Heart left ventricle (tissue), 16 donors: ENCODE measurements at regions of chr17 and their contacts with region 1.

Region 1: GRCh38 chr17:40417609-40418427 is at the start of gene TOP2A:
- DNase-seq: peak; percentile 88 to 99 (median 97)
- ATAC-seq: peak; percentile 99 to 100 (median 100)
- H3K4me3 ChIP-seq: peak within 1 kb of the TSS; percentile 37 to 80 (median 60)
- H3K27ac ChIP-seq: peak within 1 kb of the TSS in 7 of 12 donors; percentile 12 to 76 (median 39)
- H3K4me1 ChIP-seq: peaks cover 0 to 39% (median 9%) of the 10 kb centered on the region in 12 donors
- H3K27me3 ChIP-seq: peaks cover 0 to 11% (median 0%) of the 10 kb centered on the region in 9 donors
- CTCF ChIP-seq: no peak
- POLR2A ChIP-seq: no peak
- total RNA-seq, gene TOP2A: 0.39 to 28.9 (median 1.7) TPM

Region 2: GRCh38 chr17:40191237-40192208 is 226.3 kb before region 1 on chr17:
- intact Hi-C with region 1: loop called in 2 of 10 experiments (anchors 10 kb)
- DNase-seq: peak; percentile 71 to 86 (median 78)
- ATAC-seq: peak; percentile 59 to 87 (median 84)
- H3K4me3 ChIP-seq: peak overlapping the region in 11 of 12 donors; percentile 40 to 75 (median 62)
- H3K27ac ChIP-seq: peak overlapping the region in 7 of 12 donors; percentile 1 to 67 (median 46)
- H3K4me1 ChIP-seq: peaks cover 0 to 23% (median 8%) of the 10 kb centered on the region in 12 donors
- H3K27me3 ChIP-seq: no peaks in the 10 kb centered on the region
- CTCF ChIP-seq: peak; percentile 46 to 84 (median 69)
- POLR2A ChIP-seq: no peak

Region 3: GRCh38 chr17:40203131-40203530 is 214.7 kb before region 1 on chr17:
- intact Hi-C with region 1: loop called in 4 of 10 experiments (anchors 5 to 10 kb)
- DNase-seq: no peak
- ATAC-seq: peak in 2 of 4 donors; percentile 65
- H3K4me3 ChIP-seq: no peak overlapping the region
- H3K27ac ChIP-seq: no peak overlapping the region
- H3K4me1 ChIP-seq: peaks cover 0 to 16% (median 0%) of the 10 kb centered on the region in 12 donors
- H3K27me3 ChIP-seq: no peaks in the 10 kb centered on the region
- CTCF ChIP-seq: no peak
- POLR2A ChIP-seq: no peak

Region 4: DNA sequence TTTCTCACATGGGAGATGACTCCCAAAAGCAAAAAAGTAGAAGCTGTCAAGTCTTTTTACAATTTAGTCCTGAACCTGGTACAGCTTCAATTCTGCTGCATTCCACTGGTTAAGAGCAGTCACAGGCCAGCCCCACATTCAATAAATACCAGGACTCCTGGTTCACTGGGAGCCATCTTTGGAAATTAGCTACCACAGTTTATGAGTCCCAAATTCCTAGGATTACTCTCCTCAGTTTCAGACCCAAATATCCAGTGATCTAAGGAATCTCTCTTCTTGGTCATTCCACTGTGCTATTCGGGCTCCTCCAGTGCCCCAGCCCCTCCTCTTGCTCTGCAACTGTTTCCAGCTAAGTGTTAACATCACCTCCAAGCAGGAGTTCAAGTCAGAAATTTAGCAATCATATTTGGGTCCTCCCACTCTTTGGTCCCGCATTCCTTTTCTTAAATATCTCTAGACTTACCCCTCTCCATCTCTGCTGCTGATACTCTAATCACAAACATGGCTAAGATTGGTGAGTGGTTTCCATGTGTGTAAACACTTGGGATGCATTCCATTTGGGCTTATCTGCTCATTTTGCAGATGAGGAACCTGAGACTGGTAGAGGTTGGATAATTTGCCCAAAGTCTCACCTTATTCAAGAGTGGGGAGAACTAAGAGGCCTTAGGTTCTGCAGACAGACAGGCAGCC is 208.3 kb before region 1 on chr17:
- intact Hi-C with region 1: loop called in 2 of 10 experiments (anchors 5 to 10 kb)
- DNase-seq: no peak
- ATAC-seq: no peak
- H3K4me3 ChIP-seq: no peak overlapping the region
- H3K27ac ChIP-seq: no peak overlapping the region
- H3K4me1 ChIP-seq: no peaks in the 10 kb centered on the region
- H3K27me3 ChIP-seq: no peaks in the 10 kb centered on the region
- CTCF ChIP-seq: no peak
- POLR2A ChIP-seq: no peak

Region 5: DNA sequence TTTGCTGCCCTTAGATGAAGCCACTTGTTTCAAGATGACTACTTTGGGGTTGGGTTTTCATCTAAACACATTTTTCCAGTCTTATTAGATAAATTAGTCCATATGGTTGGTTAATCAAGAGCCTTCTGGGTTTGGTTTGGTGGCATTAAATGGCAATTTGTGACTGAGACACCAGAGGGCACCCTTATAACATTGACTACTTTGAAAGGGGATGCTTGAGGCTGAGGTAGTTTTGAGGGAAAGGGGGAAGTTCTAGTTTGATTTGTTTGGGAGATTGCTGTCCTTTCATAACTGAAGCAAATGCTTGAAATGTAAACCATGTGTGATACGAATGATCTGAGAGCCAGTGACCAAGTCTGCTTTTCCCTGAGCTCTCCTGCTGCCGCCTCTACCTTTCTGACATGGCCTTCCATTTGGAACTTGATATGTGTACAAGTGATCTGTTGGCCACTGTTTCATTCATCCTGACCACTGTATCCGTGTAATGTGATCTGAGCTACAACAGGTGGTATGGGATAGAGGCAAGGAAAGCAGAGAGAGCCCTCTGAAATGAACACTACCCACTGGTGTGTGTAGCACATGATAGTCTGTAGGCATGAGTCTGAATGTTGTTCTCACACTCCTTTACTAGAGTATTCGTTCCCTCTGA is 114.7 kb before region 1 on chr17:
- intact Hi-C with region 1: loop called (anchors 5 to 10 kb)
- DNase-seq: peak in 1 of 5 donors; percentile 60
- ATAC-seq: peak; percentile 33 to 71 (median 68)
- H3K4me3 ChIP-seq: no peak overlapping the region
- H3K27ac ChIP-seq: peak overlapping the region in 6 of 12 donors; percentile 4 to 64 (median 48)
- H3K4me1 ChIP-seq: peaks cover 3 to 65% (median 48%) of the 10 kb centered on the region in 12 donors
- H3K27me3 ChIP-seq: no peaks in the 10 kb centered on the region
- CTCF ChIP-seq: peak; percentile 59 to 86 (median 79)
- POLR2A ChIP-seq: no peak

Region 6: GRCh38 chr17:40309031-40309948 is 108.5 kb before region 1 on chr17 and contains the start of gene RARA:
- intact Hi-C with region 1: loop called in 9 of 10 experiments (anchors 5 to 10 kb)
- DNase-seq: peak in 2 of 5 donors; percentile 48 to 69
- ATAC-seq: peak in 3 of 4 donors; percentile 23 to 47 (median 35)
- H3K4me3 ChIP-seq: peak within 1 kb of the TSS in 11 of 12 donors; percentile 25 to 66 (median 50)
- H3K27ac ChIP-seq: peak within 1 kb of the TSS in 10 of 12 donors; percentile 19 to 99 (median 70)
- H3K4me1 ChIP-seq: peaks cover 21 to 89% (median 79%) of the 10 kb centered on the region in 12 donors
- H3K27me3 ChIP-seq: no peaks in the 10 kb centered on the region
- CTCF ChIP-seq: no peak
- POLR2A ChIP-seq: no peak
- total RNA-seq, gene RARA: 14.1 to 41.4 (median 19.4) TPM